ENCODE measurements at regions of chr7 and their contacts with region 1.

Region 1: GRCh38 chr7:141014524-141015395 is at the start of gene MRPS33:
- DNase-seq: peak; percentile 96
- H3K4me3 ChIP-seq: peak within 1 kb of the TSS; percentile 47 to 97 (median 67)
- H3K27ac ChIP-seq: peak within 1 kb of the TSS; percentile 92
- H3K4me1 ChIP-seq: peaks cover 6% of the 10 kb centered on the region
- H3K27me3 ChIP-seq: peaks cover 2% of the 10 kb centered on the region in 2 experiments
- CTCF ChIP-seq: peak; percentile 67 to 72
- POLR2A ChIP-seq: peak; percentile 81
- total RNA-seq, gene MRPS33: 34.1 and 37.4 TPM in 2 replicates

Region 2: GRCh38 chr7:140342727-140343514 is 671.8 kb before region 1 on chr7:
- CTCF ChIA-PET with region 1: no interaction called
- POLR2A ChIA-PET with region 1: no interaction called
- dilution Hi-C with region 1: no loop called
- intact Hi-C with region 1: loop called (anchors 10 kb)
- DNase-seq: peak; percentile 31
- H3K4me3 ChIP-seq: no peak overlapping the region
- H3K27ac ChIP-seq: no peak overlapping the region
- H3K4me1 ChIP-seq: peaks cover 6% of the 10 kb centered on the region
- H3K27me3 ChIP-seq: no peaks in the 10 kb centered on the region
- CTCF ChIP-seq: peak; percentile 40 to 60
- POLR2A ChIP-seq: no peak

Region 3: DNA sequence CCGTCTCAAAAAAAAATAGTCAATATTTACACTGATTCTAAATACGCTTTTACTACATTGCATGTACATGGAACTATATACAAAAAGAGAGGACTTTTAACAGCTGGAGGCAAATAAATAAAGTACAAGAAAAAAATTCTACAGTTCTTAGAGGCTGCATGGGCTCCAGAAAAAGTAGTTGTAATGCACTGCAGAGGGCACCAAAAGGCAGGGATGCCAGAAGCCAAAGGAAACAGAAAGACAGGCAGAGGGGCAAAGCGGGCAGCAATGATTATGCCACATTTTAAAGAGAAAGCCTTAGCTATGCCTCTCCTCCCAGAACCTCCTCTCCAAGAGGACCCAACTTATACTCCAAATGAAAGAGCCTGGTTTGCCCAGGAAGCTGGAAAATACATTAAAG is 353.6 kb before region 1 on chr7:
- CTCF ChIA-PET with region 1: interaction called, 11 read pairs
- POLR2A ChIA-PET with region 1: no interaction called
- dilution Hi-C with region 1: no loop called
- intact Hi-C with region 1: no loop called
- DNase-seq: no peak
- H3K4me3 ChIP-seq: no peak overlapping the region
- H3K27ac ChIP-seq: no peak overlapping the region
- H3K4me1 ChIP-seq: peaks cover 3% of the 10 kb centered on the region
- H3K27me3 ChIP-seq: peaks cover 2 to 4% of the 10 kb centered on the region in 2 experiments
- CTCF ChIP-seq: no peak
- POLR2A ChIP-seq: no peak

Region 4: GRCh38 chr7:140810830-140811556 is 203.8 kb before region 1 on chr7:
- CTCF ChIA-PET with region 1: interaction called, 81 read pairs
- POLR2A ChIA-PET with region 1: no interaction called
- dilution Hi-C with region 1: no loop called
- intact Hi-C with region 1: loop called (anchors 1 kb)
- DNase-seq: peak; percentile 77
- H3K4me3 ChIP-seq: no peak overlapping the region
- H3K27ac ChIP-seq: no peak overlapping the region
- H3K4me1 ChIP-seq: peaks cover 2% of the 10 kb centered on the region
- H3K27me3 ChIP-seq: no peaks in the 10 kb centered on the region
- CTCF ChIP-seq: peak; percentile 62 to 65
- POLR2A ChIP-seq: no peak

Region 5: GRCh38 chr7:141039376-141039775 is 24.6 kb after region 1 on chr7:
- CTCF ChIA-PET with region 1: no interaction called
- POLR2A ChIA-PET with region 1: no interaction called
- dilution Hi-C with region 1: no loop called
- intact Hi-C with region 1: no loop called
- DNase-seq: no peak
- H3K4me3 ChIP-seq: no peak overlapping the region
- H3K27ac ChIP-seq: no peak overlapping the region
- H3K4me1 ChIP-seq: no peaks in the 10 kb centered on the region
- H3K27me3 ChIP-seq: no peaks in the 10 kb centered on the region
- CTCF ChIP-seq: no peak
- POLR2A ChIP-seq: no peak

Region 6: DNA sequence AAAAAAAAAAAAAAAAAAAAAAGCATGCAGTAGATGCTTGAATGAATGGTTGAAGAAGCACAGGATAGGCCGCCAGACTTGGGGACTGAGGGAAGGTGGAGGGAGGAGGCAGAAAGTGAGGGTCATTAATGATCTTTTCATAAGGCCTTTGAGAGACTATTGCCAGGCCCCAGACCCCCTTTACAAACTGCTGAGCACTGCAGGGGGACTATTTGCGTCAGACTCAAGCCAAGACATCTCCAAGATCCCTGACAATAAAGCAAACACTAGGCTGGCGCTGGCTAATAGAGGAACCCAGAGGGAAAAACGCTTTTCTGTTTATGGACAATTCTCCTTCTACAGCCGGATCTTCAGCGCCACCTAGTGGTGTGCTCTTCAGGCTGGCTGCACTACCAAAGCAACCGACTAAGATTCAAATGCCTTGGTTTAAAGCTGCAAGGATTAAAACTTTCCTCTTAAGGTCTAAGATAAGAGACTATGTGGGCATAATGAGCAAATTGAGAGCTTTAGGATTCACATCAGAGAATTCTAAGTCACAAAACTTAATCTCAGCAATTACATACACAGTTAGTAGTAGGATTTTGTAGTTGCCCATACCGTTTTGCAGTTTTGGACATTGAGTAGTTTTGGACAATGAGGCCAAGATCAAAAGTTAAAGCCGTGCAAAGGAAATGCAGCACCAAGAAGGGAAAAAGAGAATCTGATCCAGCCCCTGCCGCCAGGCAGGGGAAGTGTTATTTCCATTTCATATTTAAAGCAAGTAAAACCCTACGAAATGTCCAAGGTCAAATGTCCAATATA is 518.6 kb after region 1 on chr7:
- CTCF ChIA-PET with region 1: interaction called, 14 read pairs
- POLR2A ChIA-PET with region 1: no interaction called
- dilution Hi-C with region 1: no loop called
- intact Hi-C with region 1: loop called (anchors 1 kb)
- DNase-seq: peak; percentile 67
- H3K4me3 ChIP-seq: no peak overlapping the region
- H3K27ac ChIP-seq: no peak overlapping the region
- H3K4me1 ChIP-seq: no peaks in the 10 kb centered on the region
- H3K27me3 ChIP-seq: peaks cover 0 to 4% of the 10 kb centered on the region in 2 experiments
- CTCF ChIP-seq: peak; percentile 91 to 97
- POLR2A ChIP-seq: no peak

Region 7: DNA sequence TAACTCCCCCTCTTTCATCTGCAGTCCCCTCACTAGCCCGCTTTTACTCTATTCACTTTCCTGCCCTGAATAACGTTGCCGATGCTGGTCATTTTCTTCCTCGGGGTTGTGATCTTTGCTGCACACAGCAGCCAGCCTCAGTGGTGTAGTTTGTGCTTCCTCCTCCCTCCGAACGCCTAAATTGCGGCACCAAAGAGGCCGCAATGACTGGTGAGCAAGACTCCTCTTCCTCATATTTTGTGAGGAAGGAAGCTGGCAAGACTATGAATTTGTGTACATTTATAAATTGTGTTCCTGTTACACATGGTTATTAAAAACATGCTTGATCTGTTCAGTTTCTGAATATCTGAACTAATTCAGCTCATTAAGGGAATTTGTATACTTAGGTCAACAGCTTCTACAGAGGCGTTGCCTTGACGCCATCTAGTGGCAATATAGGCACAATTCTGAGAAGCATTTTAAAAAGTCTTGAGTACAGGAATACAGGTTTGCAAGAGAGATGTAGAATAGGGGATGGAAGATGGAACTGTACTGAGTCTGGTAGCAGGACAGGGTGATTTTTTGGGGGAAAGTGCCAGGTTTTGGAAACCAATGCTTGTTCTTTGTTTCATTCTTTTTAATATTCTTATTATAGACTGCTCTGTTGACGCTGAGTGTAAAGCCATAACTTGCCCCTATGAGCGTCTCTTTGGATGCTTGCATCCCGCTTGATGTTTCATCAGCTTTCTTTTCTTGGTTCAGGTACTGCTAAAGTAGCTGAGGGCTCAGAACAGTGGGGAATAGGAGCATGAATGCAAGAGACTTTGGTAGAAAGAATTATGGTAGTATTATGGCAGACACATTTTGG is 771.2 kb after region 1 on chr7:
- CTCF ChIA-PET with region 1: no interaction called
- POLR2A ChIA-PET with region 1: no interaction called
- dilution Hi-C with region 1: no loop called
- intact Hi-C with region 1: loop called (anchors 5 kb)
- DNase-seq: peak; percentile 71
- H3K4me3 ChIP-seq: no peak overlapping the region
- H3K27ac ChIP-seq: no peak overlapping the region
- H3K4me1 ChIP-seq: peaks cover 21% of the 10 kb centered on the region
- H3K27me3 ChIP-seq: no peaks in the 10 kb centered on the region
- CTCF ChIP-seq: peak; percentile 66 to 72
- POLR2A ChIP-seq: no peak